GM13977 (cell line): ENCODE measurements at regions of chr11 and their contacts with region 1.

Region 1: DNA sequence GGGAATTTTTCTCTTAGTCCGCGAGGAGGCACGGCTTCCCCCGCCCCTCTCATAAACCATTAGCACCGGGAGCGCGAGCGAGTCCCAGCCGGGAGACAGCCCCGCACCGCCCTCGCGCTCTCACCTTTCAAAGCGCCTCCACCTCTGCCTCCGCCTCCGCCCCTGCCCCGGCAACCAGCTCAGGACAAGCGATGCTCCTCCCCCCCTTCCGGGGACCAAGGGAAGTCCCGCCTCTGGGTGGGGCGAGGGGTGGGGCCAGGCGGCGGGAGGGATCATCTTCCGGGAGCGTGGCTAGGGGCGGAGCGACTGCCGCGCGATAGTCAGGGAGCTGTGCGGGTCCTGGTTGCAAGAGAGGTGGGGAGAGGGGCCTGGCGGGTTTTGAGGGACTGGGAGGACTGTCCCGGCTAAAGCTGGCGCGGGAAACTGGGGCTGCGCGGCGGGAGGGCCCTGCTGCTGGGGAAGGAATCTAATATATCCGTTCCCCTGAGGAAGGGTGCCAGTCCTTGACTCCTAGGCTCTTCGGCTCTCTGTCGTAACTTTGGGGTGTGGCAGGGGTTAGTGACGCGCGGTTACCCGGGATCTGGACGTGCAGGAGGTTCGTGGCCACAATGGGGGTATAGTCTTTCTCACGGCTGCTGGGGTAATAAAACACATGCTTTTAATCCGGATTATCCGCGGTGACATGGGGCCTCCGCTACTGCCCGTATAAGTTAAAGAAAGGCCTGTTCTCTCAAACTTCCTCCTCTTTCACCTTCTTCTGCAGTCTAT is at the starts of genes CCDC82 and JRKL:
- DNase-seq: peak; percentile 93
- CTCF ChIP-seq: no peak

Region 2: GRCh38 chr11:95835768-95836488 is 554.0 kb before region 1 on chr11:
- in situ Hi-C with region 1: loop called (anchors 25 kb)
- DNase-seq: peak; percentile 19
- CTCF ChIP-seq: peak; percentile 82

Region 3: GRCh38 chr11:96098514-96099241 is 291.2 kb before region 1 on chr11:
- in situ Hi-C with region 1: no loop called
- DNase-seq: no peak
- CTCF ChIP-seq: no peak

Region 4: GRCh38 chr11:96680211-96681018 is 290.5 kb after region 1 on chr11:
- in situ Hi-C with region 1: no loop called
- DNase-seq: no peak
- CTCF ChIP-seq: no peak